K562 (cell line): ENCODE measurements at regions of chrX and their contacts with region 1.

Region 1: DNA sequence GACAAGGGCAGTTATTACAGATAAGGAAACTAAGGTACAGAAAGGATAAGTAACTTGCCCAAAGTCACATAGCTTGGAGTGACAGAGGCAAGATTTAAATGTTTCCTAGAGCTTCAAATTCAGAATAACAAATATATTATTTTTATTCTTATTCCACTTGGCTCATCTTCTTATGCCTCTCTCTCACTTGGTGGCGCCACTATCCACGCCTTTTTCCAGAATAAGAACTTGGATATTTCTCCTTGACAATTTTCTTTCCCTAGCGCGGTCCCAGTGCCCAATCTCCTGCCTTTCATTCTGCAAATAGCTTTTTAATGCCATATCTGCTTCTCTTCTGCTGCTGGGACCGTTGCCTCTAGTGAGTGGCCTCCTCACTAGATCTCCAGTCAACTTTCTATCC is 78.5 kb downstream of the MSN start:
- DNase-seq: peak in 1 of 4 experiments; percentile 56
- ATAC-seq: peak; percentile 63
- H3K4me3 ChIP-seq: no peak overlapping the region
- H3K27ac ChIP-seq: no peak overlapping the region
- H3K4me1 ChIP-seq: no peaks in the 10 kb centered on the region; a peak in 1 of 5 replicates
- H3K27me3 ChIP-seq: no peaks in the 10 kb centered on the region
- CTCF ChIP-seq: peak; percentile 39 to 68 (median 40); a peak in 4 of 6 replicates
- EP300 ChIP-seq: no peak
- POLR2A ChIP-seq: no peak
- RAD21 ChIP-seq: peak; percentile 53 to 71

Region 2: GRCh38 chrX:65581661-65582339 is 164.2 kb before region 1 on chrX:
- CTCF ChIA-PET with region 1: no interaction called
- POLR2A ChIA-PET with region 1: no interaction called
- in situ Hi-C with region 1: loop called (anchors 10 kb)
- intact Hi-C with region 1: loop called (anchors 2 kb)
- DNase-seq: peak; percentile 53 to 80 (median 60)
- ATAC-seq: peak; percentile 93
- H3K4me3 ChIP-seq: no peak overlapping the region
- H3K27ac ChIP-seq: peak overlapping the region; percentile 62; the same call in 2 of the 3 replicates
- H3K4me1 ChIP-seq: peaks cover 4 to 12% of the 10 kb centered on the region in 2 experiments; a peak in 4 of 5 replicates
- H3K27me3 ChIP-seq: no peaks in the 10 kb centered on the region
- CTCF ChIP-seq: peak; percentile 74 to 90 (median 77)
- EP300 ChIP-seq: no peak
- POLR2A ChIP-seq: no peak
- RAD21 ChIP-seq: peak; percentile 86 to 89

Region 3: GRCh38 chrX:65926095-65927019 is 180.4 kb after region 1 on chrX:
- CTCF ChIA-PET with region 1: no interaction called
- POLR2A ChIA-PET with region 1: no interaction called
- in situ Hi-C with region 1: no loop called
- intact Hi-C with region 1: loop called (anchors 5 kb)
- DNase-seq: peak; percentile 7 to 87 (median 38)
- ATAC-seq: peak; percentile 94
- H3K4me3 ChIP-seq: peak overlapping the region; percentile 67
- H3K27ac ChIP-seq: peak overlapping the region; percentile 100
- H3K4me1 ChIP-seq: peaks cover 9 to 13% of the 10 kb centered on the region in 2 experiments; a peak in 3 of 5 replicates
- H3K27me3 ChIP-seq: no peaks in the 10 kb centered on the region
- CTCF ChIP-seq: no peak
- EP300 ChIP-seq: peak; percentile 11; the same call in 1 of the 2 replicates
- POLR2A ChIP-seq: peak; percentile 94
- RAD21 ChIP-seq: no peak

Region 4: DNA sequence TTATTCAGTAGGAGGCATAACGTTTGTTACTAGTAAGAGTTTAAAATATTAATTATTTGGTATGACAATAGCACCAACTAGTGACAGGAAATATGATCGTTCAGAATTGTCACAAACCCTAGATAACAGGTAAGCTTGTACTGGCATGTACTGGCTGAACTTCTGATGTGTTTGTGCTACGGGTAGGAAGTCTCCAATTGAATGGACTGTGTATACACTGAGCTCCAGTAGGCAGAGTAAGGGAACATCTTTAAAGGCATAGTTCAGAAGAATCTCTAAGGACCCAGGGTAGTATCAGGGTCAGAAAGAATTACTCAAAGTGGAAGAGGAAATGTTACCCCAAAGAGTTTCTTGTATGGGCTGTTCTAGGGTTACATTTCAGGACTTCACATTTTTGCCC is 662.5 kb after region 1 on chrX:
- CTCF ChIA-PET with region 1: no interaction called
- POLR2A ChIA-PET with region 1: no interaction called
- in situ Hi-C with region 1: no loop called
- intact Hi-C with region 1: loop called (anchors 10 kb)
- DNase-seq: peak; percentile 3 to 15 (median 4)
- ATAC-seq: peak; percentile 71
- H3K4me3 ChIP-seq: no peak overlapping the region
- H3K27ac ChIP-seq: no peak overlapping the region
- H3K4me1 ChIP-seq: no peaks in the 10 kb centered on the region
- H3K27me3 ChIP-seq: no peaks in the 10 kb centered on the region; a peak in 1 of 5 replicates
- CTCF ChIP-seq: peak in 2 of 3 experiments; percentile 13 to 56; a peak in 2 of 6 replicates
- EP300 ChIP-seq: no peak
- POLR2A ChIP-seq: no peak
- RAD21 ChIP-seq: peak in 1 of 2 experiments; percentile 54; a peak in 3 of 4 replicates

Region 5: GRCh38 chrX:66728818-66729271 is 982.9 kb after region 1 on chrX:
- CTCF ChIA-PET with region 1: interaction called, 12 read pairs
- POLR2A ChIA-PET with region 1: no interaction called
- in situ Hi-C with region 1: no loop called
- intact Hi-C with region 1: loop called (anchors 5 kb)
- DNase-seq: peak; percentile 55 to 72 (median 58)
- ATAC-seq: peak; percentile 100
- H3K4me3 ChIP-seq: peak overlapping the region; percentile 55
- H3K27ac ChIP-seq: peak overlapping the region; percentile 78
- H3K4me1 ChIP-seq: no peaks in the 10 kb centered on the region
- H3K27me3 ChIP-seq: no peaks in the 10 kb centered on the region
- CTCF ChIP-seq: peak; percentile 57 to 88 (median 64)
- EP300 ChIP-seq: no peak
- POLR2A ChIP-seq: no peak
- RAD21 ChIP-seq: peak; percentile 49 to 63